ENCODE measurements at regions of chr11 and their contacts with region 1.

Region 1: GRCh38 chr11:62081378-62082291 is 42.2 kb upstream of the INCENP start:
- DNase-seq: peak; percentile 8
- ATAC-seq: peak; percentile 85
- H3K4me3 ChIP-seq: peak overlapping the region; percentile 11; the same call in 1 of the 2 replicates
- H3K27ac ChIP-seq: no peak overlapping the region
- H3K4me1 ChIP-seq: peaks cover 5% of the 10 kb centered on the region; the same call in 1 of the 2 replicates
- H3K27me3 ChIP-seq: no peaks in the 10 kb centered on the region
- CTCF ChIP-seq: peak; percentile 89 to 99 (median 89); a peak in 5 of 6 replicates
- EP300 ChIP-seq: no peak
- POLR2A ChIP-seq: no peak
- RAD21 ChIP-seq: peak; percentile 96

Region 2: GRCh38 chr11:61871158-61871597 is 210.5 kb before region 1 on chr11:
- CTCF ChIA-PET with region 1: interaction called, 32 read pairs
- POLR2A ChIA-PET with region 1: no interaction called
- RAD21 ChIA-PET with region 1: interaction called, 19 read pairs
- SMC1A ChIA-PET with region 1: interaction called, 9 read pairs
- in situ Hi-C with region 1: no loop called
- intact Hi-C with region 1: no loop called
- DNase-seq: no peak
- ATAC-seq: peak; percentile 93
- H3K4me3 ChIP-seq: no peak overlapping the region
- H3K27ac ChIP-seq: no peak overlapping the region
- H3K4me1 ChIP-seq: no peaks in the 10 kb centered on the region
- H3K27me3 ChIP-seq: no peaks in the 10 kb centered on the region; a peak in 1 of 4 replicates
- CTCF ChIP-seq: peak; percentile 85 to 94 (median 91)
- EP300 ChIP-seq: no peak
- POLR2A ChIP-seq: no peak
- RAD21 ChIP-seq: peak; percentile 82

Region 3: DNA sequence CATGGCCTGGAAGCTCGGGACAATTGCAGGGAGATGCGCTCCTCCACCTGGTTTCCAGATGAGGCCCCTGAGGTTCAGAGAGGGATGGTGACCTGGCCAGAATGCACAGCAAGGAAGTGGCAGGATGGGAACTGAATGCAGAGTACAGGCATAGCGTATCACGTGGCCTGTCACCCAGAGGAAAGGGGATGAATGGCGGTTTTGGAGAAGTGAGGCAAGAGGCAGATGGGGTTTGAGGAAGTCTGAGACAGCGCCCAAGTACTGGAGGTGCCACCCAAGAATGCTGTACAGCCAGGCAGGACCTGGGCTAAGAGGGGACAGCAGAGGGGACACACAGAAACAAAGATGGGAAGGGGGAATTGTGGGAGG is 169.1 kb before region 1 on chr11:
- CTCF ChIA-PET with region 1: interaction called, 12 read pairs
- POLR2A ChIA-PET with region 1: no interaction called
- RAD21 ChIA-PET with region 1: interaction called, 9 read pairs
- SMC1A ChIA-PET with region 1: interaction called, 4 read pairs
- in situ Hi-C with region 1: no loop called
- intact Hi-C with region 1: no loop called
- DNase-seq: no peak
- ATAC-seq: no peak
- H3K4me3 ChIP-seq: no peak overlapping the region
- H3K27ac ChIP-seq: no peak overlapping the region
- H3K4me1 ChIP-seq: no peaks in the 10 kb centered on the region
- H3K27me3 ChIP-seq: peaks cover 3 to 4% of the 10 kb centered on the region in 2 experiments; a peak in 3 of 4 replicates
- CTCF ChIP-seq: no peak
- EP300 ChIP-seq: no peak
- POLR2A ChIP-seq: no peak
- RAD21 ChIP-seq: no peak

Region 4: DNA sequence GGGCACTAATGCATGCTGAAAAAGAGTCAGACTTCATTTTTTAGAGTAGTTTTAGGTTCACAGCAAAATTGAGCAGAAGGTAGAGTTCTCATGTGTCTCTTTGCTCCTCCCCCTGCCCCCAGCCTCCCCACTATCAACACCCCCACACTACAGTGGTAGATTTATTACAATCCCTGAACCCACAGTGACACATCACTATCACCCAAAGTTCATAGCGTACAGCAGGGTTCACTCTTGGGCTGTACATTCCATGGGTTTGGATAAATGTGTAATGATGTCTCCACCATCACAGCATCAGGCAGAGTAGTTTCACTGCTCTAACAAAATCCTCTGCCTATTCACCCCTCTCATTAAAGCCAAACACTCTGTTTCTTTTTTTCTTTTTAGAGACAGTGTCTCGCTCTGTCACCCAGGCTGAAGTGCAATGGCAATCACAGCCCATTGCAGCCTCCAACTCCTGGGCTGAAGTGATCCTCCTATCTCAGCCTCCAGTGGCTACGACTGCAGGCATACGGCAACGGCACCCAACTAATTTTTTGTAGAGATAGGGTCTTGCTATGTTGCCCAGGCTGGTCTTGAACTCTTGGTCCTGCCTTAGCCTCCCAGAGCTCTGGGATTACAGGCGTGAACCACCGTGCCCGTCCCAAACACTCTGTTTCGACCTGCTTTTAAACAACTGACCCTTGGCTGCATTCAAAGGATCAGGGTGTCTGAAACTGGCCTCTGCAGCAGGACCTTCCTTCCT is 127.4 kb before region 1 on chr11:
- CTCF ChIA-PET with region 1: interaction called, 136 read pairs
- POLR2A ChIA-PET with region 1: interaction called, 3 read pairs
- RAD21 ChIA-PET with region 1: interaction called, 17 read pairs
- SMC1A ChIA-PET with region 1: interaction called, 50 read pairs
- in situ Hi-C with region 1: no loop called
- intact Hi-C with region 1: no loop called
- DNase-seq: no peak
- ATAC-seq: no peak
- H3K4me3 ChIP-seq: no peak overlapping the region
- H3K27ac ChIP-seq: no peak overlapping the region
- H3K4me1 ChIP-seq: peaks cover 3% of the 10 kb centered on the region; the same call in 1 of the 2 replicates
- H3K27me3 ChIP-seq: no peaks in the 10 kb centered on the region; a peak in 1 of 4 replicates
- CTCF ChIP-seq: peak in 1 of 3 experiments; percentile 14; a peak in 1 of 6 replicates
- EP300 ChIP-seq: no peak
- POLR2A ChIP-seq: no peak
- RAD21 ChIP-seq: no peak

Region 5: GRCh38 chr11:62033191-62034044 is 48.2 kb before region 1 on chr11:
- CTCF ChIA-PET with region 1: interaction called, 16 read pairs
- POLR2A ChIA-PET with region 1: no interaction called
- RAD21 ChIA-PET with region 1: interaction called, 4 read pairs
- SMC1A ChIA-PET with region 1: interaction called, 3 read pairs
- in situ Hi-C with region 1: no loop called
- intact Hi-C with region 1: no loop called
- DNase-seq: no peak
- ATAC-seq: no peak
- H3K4me3 ChIP-seq: no peak overlapping the region
- H3K27ac ChIP-seq: no peak overlapping the region
- H3K4me1 ChIP-seq: no peaks in the 10 kb centered on the region
- H3K27me3 ChIP-seq: no peaks in the 10 kb centered on the region
- CTCF ChIP-seq: no peak
- EP300 ChIP-seq: no peak
- POLR2A ChIP-seq: no peak
- RAD21 ChIP-seq: no peak

Region 6: GRCh38 chr11:62108017-62108750 is 26.5 kb after region 1 on chr11:
- CTCF ChIA-PET with region 1: interaction called, 146 read pairs
- POLR2A ChIA-PET with region 1: no interaction called
- RAD21 ChIA-PET with region 1: interaction called, 46 read pairs
- SMC1A ChIA-PET with region 1: interaction called, 77 read pairs
- in situ Hi-C with region 1: no loop called
- intact Hi-C with region 1: no loop called
- DNase-seq: peak; percentile 11
- ATAC-seq: peak; percentile 79
- H3K4me3 ChIP-seq: no peak overlapping the region
- H3K27ac ChIP-seq: no peak overlapping the region
- H3K4me1 ChIP-seq: no peaks in the 10 kb centered on the region
- H3K27me3 ChIP-seq: no peaks in the 10 kb centered on the region
- CTCF ChIP-seq: peak; percentile 59 to 82 (median 80)
- EP300 ChIP-seq: no peak
- POLR2A ChIP-seq: no peak
- RAD21 ChIP-seq: peak; percentile 91